Activated naive CD4-positive, alpha-beta T cell treated with anti-CD3 and anti-CD28 coated beads for 36 hours (primary cell): ENCODE measurements at regions of chr19 and their contacts with region 1.

Region 1: GRCh38 chr19:16062789-16063188 is 13.5 kb upstream of the TPM4 start:
- DNase-seq: peak; percentile 84
- H3K4me3 Mint-ChIP-seq: no peak overlapping the region
- H3K27ac Mint-ChIP-seq: no peak overlapping the region
- H3K4me1 Mint-ChIP-seq: peaks cover 20% of the 10 kb centered on the region
- H3K27me3 Mint-ChIP-seq: no peaks in the 10 kb centered on the region

Region 2: DNA sequence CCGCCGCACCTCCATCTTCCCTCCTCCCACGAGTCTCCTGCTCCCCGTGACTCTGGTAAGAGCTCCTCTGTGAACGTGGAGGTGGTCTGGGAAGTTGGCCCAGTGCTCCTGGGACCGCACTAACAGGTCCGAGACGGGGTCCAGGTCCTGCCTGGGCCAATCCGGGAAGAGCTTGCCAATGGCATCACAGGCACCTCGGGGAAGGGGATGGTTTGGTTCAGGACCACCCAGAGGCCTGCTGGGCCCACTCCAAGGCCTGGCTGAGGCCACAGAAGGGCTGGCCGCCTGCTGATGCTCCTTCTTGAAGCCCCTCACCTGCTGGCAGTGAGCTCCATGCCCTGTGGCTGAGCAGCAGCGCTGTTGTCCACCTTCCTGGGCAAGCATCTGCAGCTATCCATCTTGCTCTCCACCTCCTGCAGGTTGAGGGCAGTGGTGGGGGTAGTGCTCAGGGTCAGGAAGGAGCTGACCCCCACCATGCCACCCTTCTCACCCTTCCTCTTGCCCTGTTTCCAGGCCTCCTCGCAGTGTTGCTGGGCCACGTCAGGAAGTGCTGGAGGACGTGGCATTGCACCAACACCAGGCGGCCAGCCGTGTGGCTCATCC is 27.7 kb before region 1 on chr19:
- CTCF ChIA-PET with region 1: no interaction called
- intact Hi-C with region 1: no loop called
- DNase-seq: no peak
- H3K4me3 Mint-ChIP-seq: no peak overlapping the region
- H3K27ac Mint-ChIP-seq: no peak overlapping the region
- H3K4me1 Mint-ChIP-seq: no peaks in the 10 kb centered on the region
- H3K27me3 Mint-ChIP-seq: no peaks in the 10 kb centered on the region

Region 3: GRCh38 chr19:16051254-16052025 is 11.3 kb before region 1 on chr19:
- CTCF ChIA-PET with region 1: interaction called, 21 read pairs
- intact Hi-C with region 1: no loop called
- DNase-seq: peak; percentile 62
- H3K4me3 Mint-ChIP-seq: no peak overlapping the region
- H3K27ac Mint-ChIP-seq: no peak overlapping the region
- H3K4me1 Mint-ChIP-seq: peaks cover 4% of the 10 kb centered on the region
- H3K27me3 Mint-ChIP-seq: no peaks in the 10 kb centered on the region

Region 4: DNA sequence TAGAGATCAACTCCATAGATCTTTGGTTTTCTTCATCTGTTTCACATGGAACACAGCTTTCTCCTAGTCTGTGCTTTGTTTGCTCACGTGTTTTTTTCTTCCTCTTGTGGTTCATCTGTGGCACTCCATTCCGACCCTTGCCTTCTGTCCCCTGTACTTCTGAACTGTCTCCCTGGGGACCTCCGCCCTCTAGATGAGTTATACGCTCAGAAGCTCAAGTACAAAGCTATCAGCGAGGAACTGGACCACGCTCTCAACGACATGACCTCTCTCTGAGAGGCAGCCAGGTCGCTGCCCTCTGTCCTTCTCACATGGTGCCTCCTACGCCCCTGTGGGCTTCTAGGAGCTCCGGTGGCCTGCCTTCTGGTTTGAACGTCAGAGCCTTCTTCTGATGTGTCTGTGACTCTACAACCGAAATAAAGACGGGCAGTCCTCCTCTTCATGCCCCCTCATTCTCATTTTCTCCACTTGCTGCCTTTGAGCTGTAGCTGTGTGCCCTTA is 32.3 kb after region 1 on chr19:
- CTCF ChIA-PET with region 1: interaction called, 11 read pairs
- intact Hi-C with region 1: no loop called
- DNase-seq: no peak
- H3K4me3 Mint-ChIP-seq: no peak overlapping the region
- H3K27ac Mint-ChIP-seq: peak overlapping the region; percentile 74
- H3K4me1 Mint-ChIP-seq: peaks cover 28% of the 10 kb centered on the region
- H3K27me3 Mint-ChIP-seq: no peaks in the 10 kb centered on the region

Region 5: DNA sequence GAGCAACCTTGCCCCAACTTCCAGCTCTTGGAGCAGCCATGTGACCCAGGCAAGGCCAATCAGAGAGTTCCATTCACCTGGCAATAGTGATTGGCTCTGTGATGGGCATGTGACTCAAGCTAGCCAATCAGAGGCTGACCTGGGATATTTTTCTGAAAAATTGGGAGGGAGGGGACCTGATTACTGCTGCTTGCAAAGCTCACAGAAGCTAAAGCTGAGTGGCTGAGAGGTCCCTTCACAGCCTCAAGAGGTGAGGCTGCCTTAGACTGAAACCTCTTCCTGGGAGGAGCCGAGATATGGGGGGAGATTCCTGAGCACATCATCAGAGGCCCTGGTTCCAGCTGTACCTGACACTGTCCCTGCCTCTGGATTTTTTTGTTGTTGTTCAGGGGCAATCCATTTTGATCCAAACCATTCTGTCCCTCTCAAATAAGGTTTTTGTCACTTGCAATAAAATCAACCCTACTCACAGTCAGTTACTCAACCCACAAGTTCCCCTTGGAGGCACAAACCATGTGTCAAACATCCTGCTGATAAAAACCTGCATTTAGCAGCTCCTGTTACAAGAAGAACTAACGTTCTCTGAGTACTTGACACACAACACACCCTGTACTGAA is 105.8 kb after region 1 on chr19:
- CTCF ChIA-PET with region 1: no interaction called
- intact Hi-C with region 1: no loop called
- DNase-seq: no peak
- H3K4me3 Mint-ChIP-seq: no peak overlapping the region
- H3K27ac Mint-ChIP-seq: no peak overlapping the region
- H3K4me1 Mint-ChIP-seq: peaks cover 4% of the 10 kb centered on the region
- H3K27me3 Mint-ChIP-seq: no peaks in the 10 kb centered on the region